ENCODE measurements at regions of chr17 and their contacts with region 1.

Region 1: GRCh38 chr17:55845385-55845784 is 94.5 kb downstream of the PCTP start:
- DNase-seq: peak; percentile 82
- H3K4me3 ChIP-seq: peak overlapping the region in 3 of 4 donors; percentile 18 to 26 (median 26)
- H3K27ac ChIP-seq: no peak overlapping the region
- H3K4me1 ChIP-seq: peaks cover 0 to 7% (median 5%) of the 10 kb centered on the region in 4 donors
- H3K27me3 ChIP-seq: no peaks in the 10 kb centered on the region
- CTCF ChIP-seq: peak in 3 of 4 experiments; percentile 30 to 56 (median 38)
- EP300 ChIP-seq: no peak
- POLR2A ChIP-seq: no peak

Region 2: DNA sequence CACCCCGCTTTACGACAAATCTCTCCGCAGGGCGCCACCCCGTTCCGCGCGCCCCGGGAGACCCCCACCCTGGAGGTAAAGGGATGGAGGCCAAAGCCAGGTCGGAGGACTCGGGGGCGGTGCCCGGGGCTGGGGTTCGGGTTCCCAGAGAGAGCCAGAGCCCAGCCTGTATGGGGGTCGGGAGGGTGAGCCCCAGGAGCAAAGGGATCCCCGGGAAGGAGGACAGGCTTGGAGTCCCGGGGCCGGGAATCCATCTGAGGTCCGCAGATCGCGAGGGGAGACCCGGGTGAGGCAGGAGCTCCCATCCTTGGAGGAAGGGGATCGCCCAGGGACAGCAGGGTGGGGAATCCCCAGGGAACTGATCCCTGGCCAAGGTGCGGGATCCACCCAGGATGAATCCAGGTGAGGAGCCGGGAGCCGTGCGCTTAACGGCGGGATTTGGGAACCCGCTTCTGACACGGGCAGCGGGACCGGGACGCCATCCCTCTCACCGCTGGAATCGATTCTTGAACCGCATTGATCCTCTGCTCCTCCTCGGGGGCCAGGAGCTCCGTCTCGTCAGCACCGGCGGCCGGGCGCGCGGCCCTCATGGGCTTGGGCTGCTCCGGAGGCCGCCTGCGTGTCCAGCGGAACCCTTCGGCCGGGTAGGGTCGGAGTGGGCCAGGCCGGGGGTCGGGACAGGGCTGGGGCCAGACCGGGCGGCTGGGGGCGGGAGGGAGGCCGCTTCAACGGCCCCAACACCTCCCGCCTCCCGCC is 424.0 kb before region 1 on chr17 and contains the start of gene MMD:
- intact Hi-C with region 1: no loop called
- DNase-seq: peak; percentile 78
- H3K4me3 ChIP-seq: peak within 1 kb of the TSS; percentile 71 to 97 (median 96)
- H3K27ac ChIP-seq: peak within 1 kb of the TSS; percentile 90 to 97 (median 94)
- H3K4me1 ChIP-seq: peaks cover 0 to 39% (median 27%) of the 10 kb centered on the region in 4 donors
- H3K27me3 ChIP-seq: no peaks in the 10 kb centered on the region
- CTCF ChIP-seq: no peak
- EP300 ChIP-seq: peak in 1 of 4 donors; percentile 3
- POLR2A ChIP-seq: peak; percentile 30 to 42
- total RNA-seq, gene MMD: 26.9 to 51.3 (median 34.6) TPM

Region 3: DNA sequence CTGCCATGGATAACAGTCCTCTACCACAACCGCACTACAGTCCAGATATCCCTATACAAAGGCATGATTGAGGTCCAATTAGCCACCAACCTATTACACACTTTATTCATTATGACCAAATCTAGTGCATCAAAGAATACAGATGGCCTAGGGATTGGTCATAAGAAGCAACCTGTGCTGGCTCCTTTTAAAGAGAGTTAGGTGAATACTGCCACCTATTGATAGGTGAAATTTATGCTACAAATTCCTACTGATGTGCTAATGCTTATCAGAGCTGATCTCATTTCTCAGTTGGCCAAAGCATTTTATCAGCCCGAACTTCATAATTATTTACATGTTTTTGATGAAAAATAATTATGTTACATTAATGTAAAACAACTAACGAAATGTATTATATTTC is 474.1 kb after region 1 on chr17:
- intact Hi-C with region 1: loop called (anchors 5 kb)
- DNase-seq: no peak
- H3K4me3 ChIP-seq: no peak overlapping the region
- H3K27ac ChIP-seq: no peak overlapping the region
- H3K4me1 ChIP-seq: no peaks in the 10 kb centered on the region
- H3K27me3 ChIP-seq: peaks cover 0 to 4% (median 0%) of the 10 kb centered on the region in 3 donors
- CTCF ChIP-seq: peak in 3 of 4 experiments; percentile 13 to 44 (median 28)
- EP300 ChIP-seq: no peak
- POLR2A ChIP-seq: no peak

Region 4: DNA sequence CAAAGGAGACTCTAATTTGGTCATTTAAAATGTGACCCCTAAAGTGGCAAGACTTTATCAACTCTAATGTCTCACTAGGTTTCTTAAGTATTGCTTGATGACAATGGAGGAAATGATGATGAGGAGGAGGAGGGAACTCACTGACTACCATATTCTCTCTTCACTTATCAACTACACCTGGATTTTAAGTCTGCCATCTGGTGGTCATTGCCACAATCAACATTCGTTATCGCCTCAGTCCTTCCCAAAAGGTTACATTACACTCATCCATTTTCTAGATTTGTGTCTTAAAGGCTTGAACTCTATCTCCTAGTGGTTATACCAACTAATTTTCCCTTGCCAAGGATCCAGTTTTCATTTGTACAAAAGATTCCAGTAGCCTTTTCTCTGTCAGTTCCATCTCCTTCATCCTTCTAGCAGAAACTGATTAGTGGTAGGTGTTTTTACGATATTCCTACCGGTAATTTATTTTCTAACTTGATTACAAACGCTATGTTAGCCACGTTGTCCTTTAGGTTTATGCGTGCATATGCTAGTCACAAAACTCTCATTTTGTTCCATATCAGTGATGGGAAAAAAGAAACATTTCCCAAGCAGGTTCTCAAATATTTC is 633.6 kb after region 1 on chr17:
- intact Hi-C with region 1: loop called (anchors 5 kb)
- DNase-seq: no peak
- H3K4me3 ChIP-seq: no peak overlapping the region
- H3K27ac ChIP-seq: no peak overlapping the region
- H3K4me1 ChIP-seq: peaks cover 0 to 9% (median 1%) of the 10 kb centered on the region in 4 donors
- H3K27me3 ChIP-seq: no peaks in the 10 kb centered on the region
- CTCF ChIP-seq: peak in 2 of 4 experiments; percentile 14 to 33
- EP300 ChIP-seq: no peak
- POLR2A ChIP-seq: no peak

Region 5: GRCh38 chr17:56715613-56716357 is 870.4 kb after region 1 on chr17:
- intact Hi-C with region 1: loop called (anchors 5 kb)
- DNase-seq: peak; percentile 89
- H3K4me3 ChIP-seq: no peak overlapping the region
- H3K27ac ChIP-seq: no peak overlapping the region
- H3K4me1 ChIP-seq: no peaks in the 10 kb centered on the region
- H3K27me3 ChIP-seq: no peaks in the 10 kb centered on the region
- CTCF ChIP-seq: peak; percentile 42 to 82 (median 70)
- EP300 ChIP-seq: no peak
- POLR2A ChIP-seq: no peak

Measured in sigmoid colon (tissue), 7 donors.